GM12878 (cell line): ENCODE measurements at regions of chr1 and their contacts with region 1.

Region 1: GRCh38 chr1:214328770-214329469 is 48.0 kb downstream of the SMYD2 start:
- DNase-seq: peak; percentile 26
- ATAC-seq: peak; percentile 92
- H3K4me3 ChIP-seq: no peak overlapping the region
- H3K27ac ChIP-seq: no peak overlapping the region
- H3K4me1 ChIP-seq: peaks cover 4% of the 10 kb centered on the region; the same call in 1 of the 2 replicates
- H3K27me3 ChIP-seq: no peaks in the 10 kb centered on the region
- CTCF ChIP-seq: peak; percentile 89 to 93 (median 91)
- EP300 ChIP-seq: no peak
- POLR2A ChIP-seq: no peak
- RAD21 ChIP-seq: peak; percentile 99

Region 2: DNA sequence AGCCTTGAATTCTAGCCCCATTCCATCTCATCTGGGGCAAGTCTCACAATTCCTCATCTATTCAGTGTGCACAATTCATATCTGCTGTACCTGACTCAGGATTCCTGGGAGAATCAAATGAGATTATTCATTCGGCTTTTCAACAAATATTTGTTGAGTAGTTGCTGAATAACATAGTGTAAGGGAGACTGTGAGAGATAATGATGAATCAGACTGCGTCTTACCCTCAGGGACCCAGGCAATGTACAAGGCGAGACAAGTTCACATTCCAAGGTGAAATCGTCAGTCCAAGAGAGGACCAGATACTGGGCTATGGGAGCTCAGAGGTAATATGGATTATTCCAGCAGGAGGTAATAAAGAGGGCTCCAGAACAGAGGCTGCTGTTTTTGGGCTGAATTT is 115.8 kb before region 1 on chr1:
- CTCF ChIA-PET with region 1: interaction called, 226 read pairs
- POLR2A ChIA-PET with region 1: no interaction called
- RAD21 ChIA-PET with region 1: interaction called, 39 read pairs
- SMC1A ChIA-PET with region 1: interaction called, 109 read pairs
- in situ Hi-C with region 1: loop called (anchors 5 kb)
- intact Hi-C with region 1: loop called (anchors 1 kb)
- DNase-seq: no peak
- ATAC-seq: no peak
- H3K4me3 ChIP-seq: no peak overlapping the region
- H3K27ac ChIP-seq: no peak overlapping the region
- H3K4me1 ChIP-seq: no peaks in the 10 kb centered on the region
- H3K27me3 ChIP-seq: no peaks in the 10 kb centered on the region; a peak in 1 of 4 replicates
- CTCF ChIP-seq: no peak
- EP300 ChIP-seq: no peak
- POLR2A ChIP-seq: no peak
- RAD21 ChIP-seq: no peak

Region 3: DNA sequence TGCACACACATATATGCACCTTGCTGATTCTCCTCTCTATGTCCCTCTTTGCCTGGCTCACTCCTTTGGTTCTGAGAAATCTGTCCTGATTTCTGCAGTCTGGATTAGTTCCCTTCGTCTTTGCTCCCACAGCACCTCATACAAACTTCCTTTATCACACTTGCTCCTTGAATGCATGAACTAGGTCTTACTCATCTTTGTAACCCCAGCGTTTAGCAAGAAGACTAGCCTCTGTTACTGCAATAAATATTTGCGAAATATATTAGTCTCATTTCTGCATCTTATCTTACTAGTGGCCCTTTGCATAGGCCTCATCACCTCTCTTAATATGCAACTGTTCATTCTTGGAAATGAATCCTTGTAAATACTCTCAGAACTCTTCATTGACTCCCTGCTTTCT is 36.6 kb before region 1 on chr1:
- CTCF ChIA-PET with region 1: interaction called, 14 read pairs
- POLR2A ChIA-PET with region 1: no interaction called
- RAD21 ChIA-PET with region 1: interaction called, 3 read pairs
- SMC1A ChIA-PET with region 1: interaction called, 6 read pairs
- in situ Hi-C with region 1: no loop called
- intact Hi-C with region 1: no loop called
- DNase-seq: no peak
- ATAC-seq: no peak
- H3K4me3 ChIP-seq: no peak overlapping the region
- H3K27ac ChIP-seq: no peak overlapping the region
- H3K4me1 ChIP-seq: peaks cover 8% of the 10 kb centered on the region; the same call in 1 of the 2 replicates
- H3K27me3 ChIP-seq: no peaks in the 10 kb centered on the region
- CTCF ChIP-seq: no peak
- EP300 ChIP-seq: no peak
- POLR2A ChIP-seq: no peak
- RAD21 ChIP-seq: no peak

Region 4: DNA sequence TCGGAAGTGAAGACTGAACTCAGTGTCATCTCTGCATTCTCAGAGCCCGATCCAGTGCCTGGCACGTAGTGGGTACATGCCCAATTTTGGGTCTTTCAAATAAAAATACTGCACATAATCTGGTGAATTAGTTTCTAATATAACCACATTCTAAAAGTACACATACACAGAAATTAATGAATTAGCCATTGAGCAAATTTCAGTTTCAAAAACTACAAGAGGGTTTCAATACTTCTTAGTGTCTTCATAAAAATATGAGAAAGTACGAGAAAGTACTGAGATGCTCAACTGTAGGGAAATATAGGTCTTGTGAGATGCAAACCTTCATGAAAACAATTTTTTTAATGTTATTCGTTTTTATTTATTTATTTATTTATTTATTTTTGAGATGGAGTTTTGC is 38.9 kb after region 1 on chr1:
- CTCF ChIA-PET with region 1: interaction called, 15 read pairs
- POLR2A ChIA-PET with region 1: no interaction called
- RAD21 ChIA-PET with region 1: interaction called, 3 read pairs
- SMC1A ChIA-PET with region 1: interaction called, 4 read pairs
- in situ Hi-C with region 1: no loop called
- intact Hi-C with region 1: no loop called
- DNase-seq: no peak
- ATAC-seq: no peak
- H3K4me3 ChIP-seq: no peak overlapping the region
- H3K27ac ChIP-seq: no peak overlapping the region
- H3K4me1 ChIP-seq: no peaks in the 10 kb centered on the region
- H3K27me3 ChIP-seq: no peaks in the 10 kb centered on the region; a peak in 1 of 4 replicates
- CTCF ChIP-seq: no peak
- EP300 ChIP-seq: no peak
- POLR2A ChIP-seq: no peak
- RAD21 ChIP-seq: no peak

Region 5: DNA sequence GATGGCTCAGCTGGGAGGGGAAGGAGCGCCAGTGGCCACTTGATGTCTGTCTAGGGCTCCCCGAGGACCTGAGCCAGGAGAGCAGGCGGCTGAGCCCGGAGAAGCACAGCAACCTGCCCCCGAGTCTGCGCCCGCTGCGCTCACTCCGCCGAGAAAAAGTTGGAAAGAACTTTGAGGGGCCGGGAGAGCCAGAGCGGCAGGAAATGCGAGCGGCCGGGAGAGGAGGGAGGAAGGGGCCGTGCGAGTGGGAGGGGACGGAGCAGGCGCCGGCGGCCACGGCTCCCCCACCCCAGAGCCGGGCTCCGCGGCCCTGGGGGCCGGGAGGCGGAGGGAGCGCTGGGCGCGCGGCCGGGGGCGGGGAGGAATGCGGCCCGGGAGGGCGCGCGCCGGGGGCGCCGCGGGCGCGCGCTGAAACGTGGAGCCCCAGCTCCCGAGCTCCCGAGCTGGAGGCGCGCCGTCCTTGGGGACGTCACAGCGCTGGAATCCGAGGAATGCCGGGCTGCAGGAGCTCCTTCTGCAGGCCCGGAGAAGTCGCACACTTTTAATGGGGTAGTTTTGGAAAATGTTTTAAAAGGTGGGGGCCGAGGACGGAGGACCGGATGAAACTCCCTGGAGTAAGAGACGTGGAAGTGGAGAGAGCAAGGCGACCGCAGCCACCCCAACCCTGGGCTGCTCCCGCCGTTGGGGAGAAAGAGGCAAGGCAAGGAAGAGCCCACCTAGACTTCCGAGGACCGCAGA is 222.7 kb after region 1 on chr1 and contains the start of gene PTPN14:
- CTCF ChIA-PET with region 1: interaction called, 12 read pairs
- POLR2A ChIA-PET with region 1: no interaction called
- RAD21 ChIA-PET with region 1: interaction called, 4 read pairs
- SMC1A ChIA-PET with region 1: interaction called, 3 read pairs
- in situ Hi-C with region 1: no loop called
- intact Hi-C with region 1: no loop called
- DNase-seq: no peak
- ATAC-seq: peak; percentile 44
- H3K4me3 ChIP-seq: no peak within 1 kb of the TSS
- H3K27ac ChIP-seq: no peak within 1 kb of the TSS
- H3K4me1 ChIP-seq: no peaks in the 10 kb centered on the region
- H3K27me3 ChIP-seq: peaks cover 3 to 7% of the 10 kb centered on the region in 2 experiments; a peak in 3 of 4 replicates
- CTCF ChIP-seq: no peak
- EP300 ChIP-seq: no peak
- POLR2A ChIP-seq: no peak
- RAD21 ChIP-seq: no peak
- polyA plus RNA-seq, gene PTPN14: 0.05 to 0.14 TPM

Region 6: DNA sequence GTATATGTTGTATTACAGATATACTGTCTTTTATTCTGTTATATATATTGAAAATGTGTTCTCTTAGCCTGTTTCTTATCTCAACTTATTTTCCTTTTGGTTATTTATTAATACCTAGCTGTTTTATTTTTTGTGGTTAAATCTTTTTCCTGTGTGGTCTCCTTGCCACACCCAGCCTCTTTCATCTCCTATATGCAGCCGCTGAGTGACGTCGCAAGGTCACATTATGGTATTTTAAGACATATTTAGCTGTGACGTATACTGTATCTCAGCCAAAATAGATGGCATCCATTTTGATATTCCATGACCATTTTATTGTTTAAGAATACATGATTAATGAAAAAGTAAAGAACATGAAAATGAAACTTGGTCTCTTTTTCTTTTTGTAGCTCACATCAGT is 303.2 kb after region 1 on chr1:
- CTCF ChIA-PET with region 1: interaction called, 45 read pairs
- POLR2A ChIA-PET with region 1: no interaction called
- RAD21 ChIA-PET with region 1: interaction called, 26 read pairs
- SMC1A ChIA-PET with region 1: interaction called, 11 read pairs
- in situ Hi-C with region 1: no loop called
- intact Hi-C with region 1: loop called (anchors 5 kb)
- DNase-seq: no peak
- ATAC-seq: peak; percentile 38; the same call in 2 of the 3 replicates
- H3K4me3 ChIP-seq: no peak overlapping the region
- H3K27ac ChIP-seq: no peak overlapping the region
- H3K4me1 ChIP-seq: no peaks in the 10 kb centered on the region
- H3K27me3 ChIP-seq: no peaks in the 10 kb centered on the region
- CTCF ChIP-seq: no peak
- EP300 ChIP-seq: no peak
- POLR2A ChIP-seq: no peak
- RAD21 ChIP-seq: no peak